WTC11 (cell line): ENCODE measurements at regions of chr20 and their contacts with region 1.

Region 1: GRCh38 chr20:64223526-64224067 is 32.0 kb upstream of the PCMTD2 start:
- DNase-seq: peak; percentile 89
- ATAC-seq: peak; percentile 98
- H3K4me3 Mint-ChIP-seq: peak overlapping the region; percentile 34; the same call in 1 of the 2 replicates
- H3K27ac Mint-ChIP-seq: peak overlapping the region; percentile 79; the same call in 1 of the 2 replicates
- H3K4me1 Mint-ChIP-seq: peaks cover 20% of the 10 kb centered on the region
- H3K27me3 Mint-ChIP-seq: no peaks in the 10 kb centered on the region
- CTCF ChIP-seq: peak; percentile 37

Region 2: GRCh38 chr20:63756648-63756991 is 467.0 kb before region 1 on chr20:
- CTCF ChIA-PET with region 1: no interaction called
- POLR2A ChIA-PET with region 1: no interaction called
- DNase-seq: no peak
- ATAC-seq: no peak
- H3K4me3 Mint-ChIP-seq: no peak overlapping the region
- H3K27ac Mint-ChIP-seq: 0 out of 2 replicates have a peak overlapping the region, but pooled peaks have one; percentile 21
- H3K4me1 Mint-ChIP-seq: peaks cover 6% of the 10 kb centered on the region; the same call in 1 of the 2 replicates
- H3K27me3 Mint-ChIP-seq: no peaks in the 10 kb centered on the region
- CTCF ChIP-seq: no peak

Region 3: DNA sequence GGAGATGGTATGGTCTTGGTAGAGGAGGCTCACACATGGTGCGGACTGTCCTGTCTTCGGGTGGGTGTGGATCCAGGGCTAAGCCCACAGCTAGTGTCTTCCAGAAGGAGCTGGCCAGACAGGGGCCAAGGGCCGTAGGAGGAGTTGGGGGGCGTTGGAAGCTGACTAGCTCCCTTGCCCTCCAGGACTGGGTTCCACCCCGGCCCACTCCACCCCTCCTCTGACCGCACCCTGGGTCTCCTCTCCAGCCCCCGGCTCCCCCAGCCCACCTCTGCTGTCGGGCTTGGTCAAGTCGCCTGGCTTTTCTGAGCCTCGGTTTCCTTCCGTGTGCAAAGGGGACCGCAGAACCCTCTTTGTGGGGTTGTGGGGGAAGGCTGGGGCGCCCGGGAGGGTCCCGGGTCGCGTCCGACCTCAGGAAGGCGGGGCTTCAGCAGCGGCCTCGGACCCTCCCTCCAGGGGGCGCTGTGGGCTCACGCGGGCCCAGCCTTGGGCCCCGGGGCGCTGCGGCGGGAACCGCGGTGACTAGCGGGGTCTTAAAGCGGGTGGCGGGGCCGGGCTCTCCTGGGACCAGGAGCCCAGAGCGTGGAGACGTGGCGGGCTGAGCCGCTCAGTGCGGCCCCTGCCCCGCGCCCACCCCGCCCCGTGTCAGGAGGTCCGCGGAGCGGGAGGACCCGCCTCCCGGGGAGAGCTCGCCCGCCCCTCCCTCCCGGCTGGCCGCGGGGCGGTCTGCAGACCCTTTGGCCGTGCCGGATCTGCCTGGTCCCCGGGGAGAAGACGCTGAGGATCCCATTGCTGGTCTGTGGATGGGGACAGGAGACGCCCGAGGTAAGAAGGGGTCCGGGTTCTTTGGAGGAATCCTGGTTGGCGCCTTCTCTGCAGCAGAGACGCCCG is 121.6 kb before region 1 on chr20:
- CTCF ChIA-PET with region 1: interaction called, 14 read pairs
- POLR2A ChIA-PET with region 1: no interaction called
- DNase-seq: peak; percentile 79
- ATAC-seq: peak; percentile 82
- H3K4me3 Mint-ChIP-seq: peak overlapping the region; percentile 74
- H3K27ac Mint-ChIP-seq: no peak overlapping the region
- H3K4me1 Mint-ChIP-seq: peaks cover 8% of the 10 kb centered on the region
- H3K27me3 Mint-ChIP-seq: peaks cover 22% of the 10 kb centered on the region
- CTCF ChIP-seq: peak; percentile 91

Region 4: DNA sequence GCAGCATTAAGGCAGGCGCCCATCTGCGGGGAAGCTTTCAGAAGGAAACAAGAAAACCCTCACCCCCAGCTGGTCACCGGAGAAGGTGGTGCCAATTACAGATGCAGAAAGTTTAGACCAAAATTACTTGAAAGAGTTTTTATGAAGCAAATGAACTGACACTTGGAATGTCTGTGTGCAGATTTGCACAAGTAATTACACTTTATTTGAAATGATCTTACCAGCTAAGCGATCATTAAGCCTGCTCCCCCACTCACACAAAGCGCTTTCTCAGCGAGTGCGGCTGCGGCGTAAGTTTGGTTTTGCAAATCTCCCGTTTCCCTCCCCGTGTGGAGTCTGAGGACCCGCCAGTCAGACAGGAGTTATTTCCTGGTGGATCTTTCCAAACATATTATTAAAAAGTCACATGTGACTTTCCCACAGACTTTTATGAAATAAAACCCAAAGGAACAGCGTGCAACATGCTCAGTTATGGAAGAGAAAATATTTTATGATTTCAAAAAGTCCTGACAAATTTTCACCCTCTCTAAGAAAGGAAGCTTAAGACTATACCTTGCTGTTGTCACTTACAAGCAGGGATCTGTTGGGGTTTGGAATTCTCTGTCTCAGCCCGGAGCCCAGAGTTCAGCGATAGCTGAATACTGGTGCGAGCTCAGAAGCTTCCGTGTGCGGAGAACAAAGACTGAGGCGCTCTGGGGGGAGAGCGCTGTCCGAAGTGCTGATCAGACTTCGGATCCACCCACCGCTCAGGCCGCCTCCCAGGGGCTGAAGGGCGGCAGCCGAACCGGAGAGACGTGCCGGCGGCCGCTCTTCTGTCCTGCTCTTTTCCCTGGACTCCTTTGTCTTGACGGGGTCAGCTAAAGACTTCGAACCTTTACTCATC is 62.0 kb before region 1 on chr20:
- CTCF ChIA-PET with region 1: interaction called, 13 read pairs
- POLR2A ChIA-PET with region 1: no interaction called
- DNase-seq: peak; percentile 86
- ATAC-seq: peak; percentile 85
- H3K4me3 Mint-ChIP-seq: peak overlapping the region; percentile 58
- H3K27ac Mint-ChIP-seq: no peak overlapping the region
- H3K4me1 Mint-ChIP-seq: peaks cover 61% of the 10 kb centered on the region
- H3K27me3 Mint-ChIP-seq: peaks cover 37% of the 10 kb centered on the region
- CTCF ChIP-seq: no peak

Region 5: DNA sequence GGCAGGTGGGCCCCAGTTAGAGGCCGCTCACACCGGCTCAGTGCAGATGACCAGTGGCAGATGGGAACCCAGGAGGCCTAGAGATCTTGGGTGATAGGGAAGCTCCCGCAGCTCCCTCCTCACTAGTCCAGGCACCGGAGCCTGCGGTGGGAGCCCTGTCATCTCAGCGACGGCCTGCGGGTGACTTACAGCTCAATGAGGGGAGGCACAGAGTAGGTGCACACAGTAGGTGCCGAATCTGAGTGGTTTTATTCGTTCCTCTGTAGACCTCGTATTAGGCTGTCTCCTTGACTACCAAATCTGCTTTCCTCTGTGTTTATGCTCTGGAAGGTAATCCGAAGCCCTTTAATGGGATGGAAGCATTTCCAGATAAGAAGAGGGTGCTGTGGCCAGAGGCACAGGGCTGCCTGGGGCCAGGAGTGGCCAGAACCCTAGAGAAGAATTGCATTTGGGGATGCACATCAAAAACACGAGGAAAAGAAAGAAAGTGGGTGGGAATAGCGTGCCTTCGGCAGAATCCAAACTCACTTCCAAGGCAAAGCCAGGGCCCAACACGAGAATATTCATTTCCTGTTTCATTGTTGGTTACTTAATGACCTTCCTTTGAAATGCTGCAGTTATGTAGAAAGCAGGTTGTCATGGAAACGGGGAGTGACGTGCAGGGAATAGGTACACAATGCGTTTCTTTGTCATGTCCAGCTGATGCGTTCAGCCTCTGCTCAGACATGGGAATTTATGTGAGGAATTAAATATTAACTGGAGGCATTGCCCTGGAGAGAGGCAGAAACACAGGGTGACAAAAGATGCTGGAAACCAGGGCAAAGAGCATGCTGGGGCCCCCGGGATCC is 34.7 kb before region 1 on chr20:
- CTCF ChIA-PET with region 1: interaction called, 10 read pairs
- POLR2A ChIA-PET with region 1: no interaction called
- DNase-seq: peak; percentile 35
- ATAC-seq: peak; percentile 63
- H3K4me3 Mint-ChIP-seq: peak overlapping the region; percentile 40
- H3K27ac Mint-ChIP-seq: peak overlapping the region; percentile 92
- H3K4me1 Mint-ChIP-seq: peaks cover 47% of the 10 kb centered on the region
- H3K27me3 Mint-ChIP-seq: peaks cover 3% of the 10 kb centered on the region; the same call in 1 of the 2 replicates
- CTCF ChIP-seq: no peak

Region 6: DNA sequence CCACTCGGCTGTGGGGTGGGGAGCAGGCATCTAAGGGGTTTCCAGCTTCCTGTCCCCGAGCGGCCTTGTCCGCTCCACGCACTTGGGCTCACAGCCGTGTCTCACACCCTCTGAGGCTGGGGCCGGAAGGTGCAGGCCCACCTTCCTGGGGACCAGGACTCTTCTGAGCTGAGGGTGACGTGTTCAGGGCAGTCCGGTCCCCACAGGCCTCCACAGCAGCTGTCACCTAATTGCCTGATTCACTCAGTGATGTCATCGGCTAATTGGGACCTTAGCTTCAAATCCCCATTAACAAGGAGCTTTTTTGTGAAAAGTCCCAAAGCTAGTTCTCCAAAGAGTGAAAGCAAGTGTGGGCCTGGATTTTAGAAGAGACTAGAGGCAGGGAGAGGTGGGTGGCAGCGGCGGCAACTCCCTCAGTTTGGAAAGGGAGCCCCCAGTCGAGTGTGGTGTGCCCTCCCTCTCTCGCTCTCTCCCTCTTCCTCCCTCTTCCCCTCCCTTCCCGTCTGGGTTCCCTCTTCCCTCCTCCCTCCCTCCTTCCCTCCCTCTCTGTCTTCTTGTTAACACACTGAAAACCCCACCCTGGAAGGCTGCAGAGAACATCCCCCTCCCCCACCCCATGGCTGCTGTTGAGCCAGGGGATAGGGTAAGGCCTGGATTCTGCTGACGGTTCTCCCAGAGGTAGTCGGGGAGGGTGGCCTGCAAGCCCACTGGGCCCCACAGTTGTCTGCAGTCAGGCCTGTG is 20.4 kb before region 1 on chr20:
- CTCF ChIA-PET with region 1: interaction called, 24 read pairs
- POLR2A ChIA-PET with region 1: no interaction called
- DNase-seq: no peak
- ATAC-seq: no peak
- H3K4me3 Mint-ChIP-seq: no peak overlapping the region
- H3K27ac Mint-ChIP-seq: no peak overlapping the region
- H3K4me1 Mint-ChIP-seq: no peaks in the 10 kb centered on the region
- H3K27me3 Mint-ChIP-seq: no peaks in the 10 kb centered on the region
- CTCF ChIP-seq: no peak

Region 7: DNA sequence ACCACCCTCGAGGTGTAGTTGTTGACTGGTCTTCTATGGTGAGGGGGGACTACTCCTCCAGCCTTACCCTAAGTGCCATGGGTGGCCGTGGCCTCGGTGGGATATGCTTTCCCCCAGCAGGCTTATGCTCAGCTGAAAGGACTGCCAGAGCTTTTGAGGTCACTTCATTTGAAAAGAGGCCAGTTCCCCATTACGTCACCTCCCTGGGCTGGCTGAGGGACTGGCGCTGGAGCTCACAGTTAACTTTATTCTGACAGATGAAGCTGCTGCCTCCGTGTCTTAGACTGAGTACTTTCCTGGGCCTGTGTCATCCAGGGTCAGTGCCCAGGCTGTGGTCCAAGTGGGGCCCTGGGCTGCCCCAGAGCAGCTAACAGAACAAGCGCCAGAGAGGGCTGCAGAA is 10.8 kb before region 1 on chr20:
- CTCF ChIA-PET with region 1: interaction called, 29 read pairs
- POLR2A ChIA-PET with region 1: no interaction called
- DNase-seq: no peak
- ATAC-seq: no peak
- H3K4me3 Mint-ChIP-seq: no peak overlapping the region
- H3K27ac Mint-ChIP-seq: no peak overlapping the region
- H3K4me1 Mint-ChIP-seq: no peaks in the 10 kb centered on the region
- H3K27me3 Mint-ChIP-seq: no peaks in the 10 kb centered on the region
- CTCF ChIP-seq: no peak

Region 8: DNA sequence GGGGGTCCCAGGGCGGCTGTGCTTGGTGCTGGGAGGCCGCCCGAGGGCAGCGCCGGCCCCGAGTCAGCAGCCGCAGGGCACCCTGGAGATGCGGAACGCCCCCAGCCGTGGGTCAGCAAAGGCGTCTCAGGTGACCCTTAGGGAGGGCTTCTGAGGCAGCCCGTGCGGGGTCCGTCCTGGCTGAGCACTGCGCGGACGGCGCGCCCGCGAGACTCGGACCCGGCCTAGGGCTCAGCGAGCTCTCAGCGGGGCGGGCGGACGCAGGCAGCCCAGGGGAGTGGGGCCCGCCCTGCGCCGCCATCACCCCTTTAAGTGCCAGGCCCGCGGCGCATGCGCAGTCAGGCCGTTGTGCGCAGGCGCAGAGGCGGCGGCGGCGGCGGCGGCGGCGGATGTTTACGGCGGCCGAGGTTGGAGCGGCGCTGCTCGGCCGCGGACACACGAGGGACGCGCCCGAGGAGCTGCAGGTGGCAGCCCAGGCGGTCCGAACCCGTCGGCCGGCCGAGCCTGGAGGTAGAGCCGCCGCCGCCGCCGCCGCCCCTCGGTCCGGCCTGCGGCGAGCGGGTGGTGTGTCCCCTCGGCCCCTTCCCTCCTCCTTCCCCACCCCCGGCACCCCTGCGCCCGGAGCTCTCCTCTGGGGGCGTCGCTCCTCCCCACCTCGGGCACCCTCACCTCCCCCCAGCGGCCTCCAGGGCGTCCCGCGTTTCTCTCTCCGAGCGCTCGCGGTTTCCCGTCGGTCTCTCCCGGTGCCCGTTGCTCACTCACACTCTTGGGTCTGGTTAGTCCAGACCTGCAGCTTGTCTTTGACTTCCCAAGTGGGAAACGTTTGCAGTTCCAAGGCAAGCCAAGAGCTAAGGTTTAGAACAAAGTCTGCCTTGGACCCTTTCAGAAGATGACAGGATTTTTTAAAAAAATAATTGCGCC is 32.0 kb after region 1 on chr20 and contains the start of gene PCMTD2:
- CTCF ChIA-PET with region 1: interaction called, 13 read pairs
- POLR2A ChIA-PET with region 1: interaction called, 4 read pairs
- DNase-seq: peak; percentile 84
- ATAC-seq: peak; percentile 94
- H3K4me3 Mint-ChIP-seq: peak within 1 kb of the TSS; percentile 92
- H3K27ac Mint-ChIP-seq: peak within 1 kb of the TSS; percentile 79
- H3K4me1 Mint-ChIP-seq: peaks cover 32% of the 10 kb centered on the region
- H3K27me3 Mint-ChIP-seq: peaks cover 14% of the 10 kb centered on the region
- CTCF ChIP-seq: no peak
- total RNA-seq, gene PCMTD2: 50.9 to 61.1 TPM (median 57.7 TPM) in 3 replicates